ENCODE measurements at regions of chr3 and their contacts with region 1.

Region 1: DNA sequence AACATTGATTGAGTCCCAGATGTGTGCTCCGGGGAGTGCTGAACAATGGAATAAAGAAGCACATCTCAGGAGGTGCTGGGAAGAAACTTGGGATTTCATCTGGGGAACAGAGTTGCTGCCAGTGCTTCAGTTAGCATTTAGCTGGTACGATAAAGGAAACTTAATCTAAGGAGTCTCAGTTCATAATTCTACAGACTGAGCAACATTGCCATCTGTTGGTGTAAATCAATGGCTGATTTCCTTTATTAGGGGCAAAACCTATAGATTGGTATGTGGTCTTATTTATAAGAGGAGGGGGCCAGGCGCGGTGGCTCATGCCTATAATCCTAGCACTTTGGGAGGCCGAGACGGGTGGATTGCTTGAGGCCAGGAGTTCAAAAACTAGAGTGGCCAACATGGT is 8.9 kb downstream of the MKRN2OS start:
- DNase-seq: no peak
- H3K4me3 ChIP-seq: no peak overlapping the region
- CTCF ChIP-seq: peak; percentile 29

Region 2: DNA sequence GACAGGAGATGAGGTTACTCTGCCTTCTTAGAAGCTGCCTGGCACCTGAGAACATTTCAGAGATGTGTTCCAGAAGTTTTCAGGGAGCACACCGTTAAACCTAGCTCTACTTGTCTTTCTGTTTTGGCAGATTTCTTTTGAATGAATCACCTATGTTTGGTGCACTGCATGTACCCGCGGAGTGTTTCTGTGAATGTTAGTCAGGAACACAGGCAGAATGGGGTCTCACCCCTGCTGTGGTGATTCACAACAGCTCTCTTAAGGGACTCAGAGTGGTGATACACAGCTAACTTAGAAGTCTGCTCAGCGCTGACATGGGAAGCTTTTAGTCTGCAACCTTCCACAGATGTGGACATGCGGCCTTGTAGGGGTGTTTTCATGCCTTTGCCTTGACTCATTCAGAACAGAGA is 28.1 kb before region 1 on chr3:
- CTCF ChIA-PET with region 1: interaction called, 18 read pairs
- POLR2A ChIA-PET with region 1: no interaction called
- DNase-seq: peak; percentile 92
- H3K4me3 ChIP-seq: peak overlapping the region; percentile 29; the same call in 1 of the 2 replicates
- CTCF ChIP-seq: no peak

Measured in AG04449 (cell line).